Activated CD4-positive, alpha-beta memory T cell treated with anti-CD3 and anti-CD28 coated beads for 36 hours (primary cell): ENCODE measurements at regions of chr17 and their contacts with region 1.

Region 1: GRCh38 chr17:7306911-7307686 is at the start of gene EIF5A:
- DNase-seq: peak; percentile 100
- H3K4me3 Mint-ChIP-seq: peak within 1 kb of the TSS; percentile 85
- H3K27ac Mint-ChIP-seq: peak within 1 kb of the TSS; percentile 97
- H3K4me1 Mint-ChIP-seq: peaks cover 29% of the 10 kb centered on the region
- H3K27me3 Mint-ChIP-seq: peaks cover 2% of the 10 kb centered on the region
- total RNA-seq, gene EIF5A: 774 to 776 TPM

Region 2: DNA sequence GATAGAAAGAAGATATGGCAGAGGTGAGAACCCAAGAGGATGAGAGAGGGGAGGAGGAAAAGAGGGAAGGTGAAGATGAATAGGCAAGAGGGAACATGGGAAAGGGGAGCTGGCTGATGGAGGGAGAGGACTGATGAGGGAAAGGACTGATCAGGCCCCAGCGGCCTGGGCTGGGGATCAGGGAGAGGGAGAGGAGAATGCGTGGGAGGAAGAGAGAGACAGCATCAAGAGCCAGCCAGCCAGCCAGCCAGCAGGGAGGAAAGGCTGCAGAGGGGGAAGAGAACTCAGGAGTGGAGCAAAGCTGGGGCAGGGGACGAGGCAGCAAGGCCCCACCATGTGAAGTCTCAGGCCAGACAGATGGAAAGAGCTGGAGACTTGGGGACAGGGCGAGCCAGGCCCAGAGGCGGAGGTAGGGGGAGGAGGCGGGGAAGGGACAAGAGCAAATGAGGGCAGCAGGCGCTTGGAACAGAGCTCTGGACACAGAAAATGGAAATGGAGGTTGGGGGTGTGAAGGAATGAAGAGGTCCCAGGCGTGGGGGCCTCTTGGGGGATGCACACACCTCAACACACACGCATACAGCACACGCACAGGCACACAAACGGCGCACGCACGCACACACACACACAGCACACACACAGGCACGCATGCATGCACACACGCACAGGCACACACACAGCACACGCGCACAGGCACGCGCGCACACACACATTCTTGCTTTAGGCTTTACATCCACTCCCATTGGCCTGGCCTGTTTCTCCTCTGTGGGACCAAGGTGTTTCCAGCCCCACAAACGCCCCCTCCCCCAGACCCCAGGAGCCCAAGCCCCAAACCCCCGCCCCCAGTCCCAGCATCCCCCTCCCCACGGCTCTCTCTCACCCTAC is 99.7 kb before region 1 on chr17:
- CTCF ChIA-PET with region 1: no interaction called
- POLR2A ChIA-PET with region 1: no interaction called
- intact Hi-C with region 1: no loop called
- DNase-seq: no peak
- H3K4me3 Mint-ChIP-seq: no peak overlapping the region
- H3K27ac Mint-ChIP-seq: no peak overlapping the region
- H3K4me1 Mint-ChIP-seq: peaks cover 21% of the 10 kb centered on the region
- H3K27me3 Mint-ChIP-seq: peaks cover 6% of the 10 kb centered on the region

Region 3: DNA sequence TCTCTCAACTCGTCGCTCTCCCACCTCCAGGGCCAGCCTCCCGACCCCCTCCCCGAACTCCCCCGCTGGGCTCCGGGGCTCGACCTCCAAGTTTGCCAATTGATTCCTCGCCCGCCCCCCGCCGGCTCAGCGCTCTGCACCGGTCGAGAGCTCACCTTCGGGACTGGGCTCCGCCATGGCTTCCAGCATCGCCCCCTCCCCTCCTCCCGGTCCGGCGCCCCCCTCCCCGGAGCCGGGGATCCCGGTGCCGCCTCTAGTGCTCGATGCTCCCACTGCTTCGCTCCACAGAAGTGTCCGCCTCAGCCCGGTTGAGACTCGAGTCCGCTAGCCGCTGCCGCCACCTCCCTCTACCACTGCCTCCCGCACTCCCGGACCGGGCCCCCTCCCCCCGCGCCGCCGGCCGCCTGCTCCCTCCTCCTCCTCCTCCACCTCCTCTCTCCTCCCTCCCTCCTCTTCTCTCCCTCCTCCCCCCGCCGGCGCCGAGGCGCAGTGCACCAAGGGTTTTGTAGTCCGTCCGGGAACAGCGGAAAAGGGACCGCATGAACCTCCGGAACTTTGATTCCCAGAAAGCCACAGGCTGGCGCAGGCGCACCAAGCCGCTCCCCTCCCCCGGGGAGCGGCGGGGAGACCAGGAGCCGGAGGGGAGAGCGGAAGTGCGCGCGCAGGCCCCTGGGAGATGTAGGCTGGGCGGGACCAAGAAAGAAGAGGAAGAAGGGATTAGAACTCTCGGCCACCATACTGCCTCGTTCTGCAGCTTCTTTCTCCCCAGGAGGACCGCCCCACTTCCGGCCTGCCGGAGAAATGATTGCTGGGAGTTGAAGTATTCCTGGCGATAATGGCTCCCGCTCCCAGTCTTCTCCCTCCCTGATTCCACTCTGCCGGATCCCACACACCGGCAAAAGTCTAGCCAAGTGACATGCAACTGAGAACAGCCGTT is 67.7 kb before region 1 on chr17 and contains the start of gene PHF23:
- CTCF ChIA-PET with region 1: interaction called, 3 read pairs
- POLR2A ChIA-PET with region 1: interaction called, 3 read pairs
- intact Hi-C with region 1: loop called (anchors 1 kb)
- DNase-seq: peak; percentile 99
- H3K4me3 Mint-ChIP-seq: peak within 1 kb of the TSS; percentile 94
- H3K27ac Mint-ChIP-seq: peak within 1 kb of the TSS; percentile 97
- H3K4me1 Mint-ChIP-seq: peaks cover 59% of the 10 kb centered on the region
- H3K27me3 Mint-ChIP-seq: peaks cover 4% of the 10 kb centered on the region
- total RNA-seq, gene PHF23: 24.0 to 28.7 TPM

Region 4: GRCh38 chr17:7296189-7296902 is 10.8 kb before region 1 on chr17:
- CTCF ChIA-PET with region 1: interaction called, 12 read pairs
- POLR2A ChIA-PET with region 1: interaction called, 4 read pairs
- intact Hi-C with region 1: no loop called
- DNase-seq: peak; percentile 79
- H3K4me3 Mint-ChIP-seq: peak overlapping the region; percentile 35
- H3K27ac Mint-ChIP-seq: no peak overlapping the region
- H3K4me1 Mint-ChIP-seq: peaks cover 21% of the 10 kb centered on the region
- H3K27me3 Mint-ChIP-seq: peaks cover 26% of the 10 kb centered on the region

Region 5: DNA sequence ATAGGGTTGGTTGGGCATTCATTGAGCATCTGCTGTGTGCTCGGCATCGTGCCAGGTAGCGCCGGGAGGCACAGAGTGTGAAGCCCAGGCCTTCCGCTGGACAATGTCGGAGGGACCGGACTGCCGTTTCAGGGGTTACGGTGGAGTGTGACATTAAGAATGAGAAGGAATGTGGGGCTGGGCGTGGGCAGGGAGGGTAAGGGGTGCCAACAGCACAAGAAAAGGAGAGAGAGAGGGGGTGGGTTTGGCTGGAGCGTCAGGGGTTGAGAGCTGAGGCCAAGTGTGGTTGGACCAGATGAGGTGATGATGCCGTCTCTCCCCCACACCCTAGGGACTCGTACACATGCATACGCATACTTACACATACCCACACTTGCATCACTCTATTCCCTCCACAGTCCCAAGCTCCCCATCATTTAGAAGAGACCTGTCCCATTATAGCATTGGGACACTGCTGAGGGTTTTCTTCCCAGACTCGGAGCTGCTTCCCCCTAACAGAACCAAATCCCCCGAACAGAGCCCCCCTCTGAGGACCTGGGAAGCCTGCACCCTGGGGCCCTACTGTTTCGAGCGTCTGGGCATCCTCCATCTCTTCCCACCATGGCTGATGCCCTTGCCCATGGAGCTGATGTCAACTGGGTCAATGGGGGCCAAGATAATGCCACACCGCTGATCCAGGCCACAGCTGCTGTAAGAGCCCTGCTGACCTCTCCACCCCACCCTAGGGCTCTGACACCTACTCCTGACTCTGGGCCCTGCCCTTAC is 41.6 kb after region 1 on chr17:
- CTCF ChIA-PET with region 1: no interaction called
- POLR2A ChIA-PET with region 1: no interaction called
- intact Hi-C with region 1: no loop called
- DNase-seq: no peak
- H3K4me3 Mint-ChIP-seq: no peak overlapping the region
- H3K27ac Mint-ChIP-seq: no peak overlapping the region
- H3K4me1 Mint-ChIP-seq: peaks cover 28% of the 10 kb centered on the region
- H3K27me3 Mint-ChIP-seq: no peaks in the 10 kb centered on the region

Region 6: DNA sequence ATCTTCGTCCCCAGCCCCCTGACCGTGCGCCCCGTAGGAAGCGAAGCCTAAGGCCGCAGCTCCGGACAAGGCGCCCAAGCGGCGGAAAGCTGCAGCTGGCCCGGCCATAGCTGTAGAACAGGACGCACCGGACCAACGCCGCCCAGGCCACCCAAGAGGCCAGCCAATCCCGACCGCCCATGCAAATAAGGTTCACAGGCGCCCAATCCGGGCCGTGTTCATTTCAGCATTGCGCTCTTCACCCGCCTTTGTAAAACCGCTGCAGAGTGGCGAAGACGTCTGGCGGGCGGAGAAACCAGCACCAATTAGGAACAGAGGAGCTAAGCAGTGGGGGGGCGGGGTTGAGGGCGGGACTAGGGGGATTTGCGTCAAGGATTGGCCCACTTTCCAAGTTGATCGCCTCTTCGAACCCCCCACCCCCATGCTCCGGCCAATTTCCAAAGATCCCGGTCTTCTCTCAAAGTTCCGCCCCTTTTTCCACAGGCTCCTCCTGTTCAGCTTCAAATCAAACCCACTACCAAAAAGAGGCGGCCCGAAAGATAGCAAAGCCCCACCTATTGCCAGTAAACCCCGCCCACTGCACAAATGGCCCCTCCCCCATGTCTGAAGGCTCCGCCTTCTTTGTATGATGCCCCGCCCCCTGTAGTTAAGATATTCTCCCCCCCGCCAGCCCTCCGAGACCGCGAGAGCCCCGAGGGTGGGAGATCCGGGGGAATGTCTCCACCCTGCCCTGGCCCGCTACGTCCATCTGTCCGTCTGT is 97.1 kb after region 1 on chr17 and contains the start of gene TMEM256:
- CTCF ChIA-PET with region 1: no interaction called
- POLR2A ChIA-PET with region 1: no interaction called
- intact Hi-C with region 1: loop called (anchors 5 kb)
- DNase-seq: peak; percentile 99
- H3K4me3 Mint-ChIP-seq: peak within 1 kb of the TSS; percentile 97
- H3K27ac Mint-ChIP-seq: peak within 1 kb of the TSS; percentile 92
- H3K4me1 Mint-ChIP-seq: peaks cover 25% of the 10 kb centered on the region
- H3K27me3 Mint-ChIP-seq: no peaks in the 10 kb centered on the region
- total RNA-seq, gene TMEM256: 87.0 to 88.5 TPM

Region 7: DNA sequence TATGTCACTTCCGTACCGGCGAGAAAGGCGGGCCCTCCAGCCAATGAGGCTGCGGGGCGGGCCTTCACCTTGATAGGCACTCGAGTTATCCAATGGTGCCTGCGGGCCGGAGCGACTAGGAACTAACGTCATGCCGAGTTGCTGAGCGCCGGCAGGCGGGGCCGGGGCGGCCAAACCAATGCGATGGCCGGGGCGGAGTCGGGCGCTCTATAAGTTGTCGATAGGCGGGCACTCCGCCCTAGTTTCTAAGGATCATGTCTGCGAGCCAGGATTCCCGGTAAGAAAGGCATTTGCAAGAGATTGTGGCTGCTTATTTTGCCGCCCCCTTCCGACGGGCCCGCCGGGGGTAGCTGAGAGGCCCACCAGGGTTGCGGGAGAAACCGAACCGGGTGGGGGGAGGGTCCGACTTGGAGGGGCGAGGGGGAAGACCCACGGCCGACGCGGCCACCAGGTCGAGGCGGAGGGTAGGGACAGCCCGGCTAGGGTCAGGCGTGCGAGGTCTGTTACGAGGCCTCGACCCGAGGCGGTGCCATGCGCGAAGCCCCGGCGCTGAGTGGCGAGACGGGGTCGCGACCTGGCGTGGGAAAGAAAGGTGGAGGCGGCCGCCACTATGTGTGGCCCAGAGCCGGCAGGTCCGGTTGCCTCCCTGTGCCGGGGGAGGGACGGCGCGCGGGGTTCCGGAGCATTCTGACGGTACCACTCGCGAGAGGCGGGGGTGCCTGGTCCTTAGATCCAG is 265.7 kb after region 1 on chr17:
- CTCF ChIA-PET with region 1: no interaction called
- POLR2A ChIA-PET with region 1: interaction called, 3 read pairs
- intact Hi-C with region 1: loop called (anchors 1 kb)
- DNase-seq: peak; percentile 100
- H3K4me3 Mint-ChIP-seq: peak overlapping the region; percentile 99
- H3K27ac Mint-ChIP-seq: peak overlapping the region; percentile 100
- H3K4me1 Mint-ChIP-seq: peaks cover 50% of the 10 kb centered on the region
- H3K27me3 Mint-ChIP-seq: peaks cover 2% of the 10 kb centered on the region